Naive thymus-derived CD8-positive, alpha-beta T cell (primary cell): ENCODE measurements at regions of chr20 and their contacts with region 1.

Region 1: GRCh38 chr20:53635221-53635924 is 41.7 kb upstream of the ZNF217 start:
- DNase-seq: no peak
- ATAC-seq: peak; percentile 36 to 53
- H3K4me3 Mint-ChIP-seq: peak overlapping the region in 4 of 10 donors; percentile 1 to 45 (median 39)
- H3K27ac Mint-ChIP-seq: peak overlapping the region in 7 of 10 donors; percentile 4 to 83 (median 52)
- H3K4me1 Mint-ChIP-seq: peaks cover 21 to 42% (median 37%) of the 10 kb centered on the region in 4 donors
- H3K27me3 Mint-ChIP-seq: no peaks in the 10 kb centered on the region

Region 2: GRCh38 chr20:53623454-53624211 is 11.7 kb before region 1 on chr20:
- POLR2A ChIA-PET with region 1: interaction called, 28 read pairs
- DNase-seq: peak in 4 of 10 donors; percentile 5 to 37 (median 20)
- ATAC-seq: peak; percentile 63 to 74
- H3K4me3 Mint-ChIP-seq: peak overlapping the region; percentile 76 to 90 (median 82)
- H3K27ac Mint-ChIP-seq: peak overlapping the region; percentile 89 to 98 (median 94)
- H3K4me1 Mint-ChIP-seq: peaks cover 14 to 52% (median 49%) of the 10 kb centered on the region in 4 donors
- H3K27me3 Mint-ChIP-seq: no peaks in the 10 kb centered on the region

Region 3: DNA sequence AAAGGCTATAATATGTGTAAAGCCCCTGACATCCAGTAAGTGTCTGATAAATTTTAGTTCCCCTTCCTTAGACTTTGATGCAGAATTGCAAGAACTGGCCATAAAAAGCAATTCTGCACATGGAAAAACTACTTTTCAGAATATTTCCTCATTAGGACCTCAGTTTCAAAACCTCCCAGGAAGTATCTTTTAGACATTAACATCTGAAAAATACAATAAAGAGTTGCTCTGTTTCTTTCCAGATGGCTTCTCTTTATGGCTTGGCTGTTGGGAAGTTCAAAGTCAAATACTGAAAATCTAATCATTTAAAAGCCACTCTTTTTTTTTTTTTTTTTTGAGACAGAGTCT is 64.6 kb after region 1 on chr20:
- POLR2A ChIA-PET with region 1: no interaction called
- DNase-seq: no peak
- ATAC-seq: no peak
- H3K4me3 Mint-ChIP-seq: no peak overlapping the region
- H3K27ac Mint-ChIP-seq: peak overlapping the region in 6 of 10 donors; percentile 13 to 73 (median 56)
- H3K4me1 Mint-ChIP-seq: peaks cover 9 to 33% (median 21%) of the 10 kb centered on the region in 4 donors
- H3K27me3 Mint-ChIP-seq: no peaks in the 10 kb centered on the region